B cell (primary cell): ENCODE measurements at regions of chr10 and their contacts with region 1.

Region 1: GRCh38 chr10:84195041-84195820 is 894 bp downstream of the CDHR1 start:
- DNase-seq: no peak
- ATAC-seq: no peak
- H3K4me3 ChIP-seq: peak overlapping the region in 3 of 5 experiments; percentile 34 to 51 (median 46)
- H3K4me3 Mint-ChIP-seq: peak overlapping the region; percentile 78
- H3K27ac ChIP-seq: no peak overlapping the region
- H3K27ac Mint-ChIP-seq: no peak overlapping the region
- H3K4me1 ChIP-seq: peaks cover 14 to 15% of the 10 kb centered on the region in 2 donors
- H3K4me1 Mint-ChIP-seq: peaks cover 8% of the 10 kb centered on the region
- H3K27me3 ChIP-seq: peaks cover 0 to 49% (median 24%) of the 10 kb centered on the region in 4 experiments
- H3K27me3 Mint-ChIP-seq: peaks cover 44% of the 10 kb centered on the region
- CTCF ChIP-seq: no peak

Region 2: GRCh38 chr10:84179059-84179710 is 16.0 kb before region 1 on chr10:
- CTCF ChIA-PET with region 1: no interaction called
- POLR2A ChIA-PET with region 1: interaction called, 12 read pairs
- intact Hi-C with region 1: no loop called
- DNase-seq: peak; percentile 87
- ATAC-seq: peak; percentile 89
- H3K4me3 ChIP-seq: peak overlapping the region in 2 of 5 experiments; percentile 15 to 50
- H3K4me3 Mint-ChIP-seq: no peak overlapping the region
- H3K27ac ChIP-seq: peak overlapping the region; percentile 74 to 77
- H3K27ac Mint-ChIP-seq: no peak overlapping the region
- H3K4me1 ChIP-seq: peaks cover 25 to 32% of the 10 kb centered on the region in 2 donors
- H3K4me1 Mint-ChIP-seq: peaks cover 5% of the 10 kb centered on the region
- H3K27me3 ChIP-seq: peaks cover 0 to 1% (median 0%) of the 10 kb centered on the region in 4 experiments
- H3K27me3 Mint-ChIP-seq: no peaks in the 10 kb centered on the region
- CTCF ChIP-seq: no peak

Region 3: GRCh38 chr10:84429926-84430520 is 234.8 kb after region 1 on chr10:
- CTCF ChIA-PET with region 1: no interaction called
- POLR2A ChIA-PET with region 1: no interaction called
- intact Hi-C with region 1: no loop called
- DNase-seq: peak; percentile 55
- ATAC-seq: peak; percentile 58
- H3K4me3 ChIP-seq: no peak overlapping the region
- H3K4me3 Mint-ChIP-seq: no peak overlapping the region
- H3K27ac ChIP-seq: no peak overlapping the region
- H3K27ac Mint-ChIP-seq: no peak overlapping the region
- H3K4me1 ChIP-seq: no peaks in the 10 kb centered on the region
- H3K4me1 Mint-ChIP-seq: peaks cover 6% of the 10 kb centered on the region
- H3K27me3 ChIP-seq: no peaks in the 10 kb centered on the region
- H3K27me3 Mint-ChIP-seq: no peaks in the 10 kb centered on the region
- CTCF ChIP-seq: peak; percentile 81